Lower leg skin (tissue), 4 donors: ENCODE measurements at regions of chr6 and their contacts with region 1.

Region 1: DNA sequence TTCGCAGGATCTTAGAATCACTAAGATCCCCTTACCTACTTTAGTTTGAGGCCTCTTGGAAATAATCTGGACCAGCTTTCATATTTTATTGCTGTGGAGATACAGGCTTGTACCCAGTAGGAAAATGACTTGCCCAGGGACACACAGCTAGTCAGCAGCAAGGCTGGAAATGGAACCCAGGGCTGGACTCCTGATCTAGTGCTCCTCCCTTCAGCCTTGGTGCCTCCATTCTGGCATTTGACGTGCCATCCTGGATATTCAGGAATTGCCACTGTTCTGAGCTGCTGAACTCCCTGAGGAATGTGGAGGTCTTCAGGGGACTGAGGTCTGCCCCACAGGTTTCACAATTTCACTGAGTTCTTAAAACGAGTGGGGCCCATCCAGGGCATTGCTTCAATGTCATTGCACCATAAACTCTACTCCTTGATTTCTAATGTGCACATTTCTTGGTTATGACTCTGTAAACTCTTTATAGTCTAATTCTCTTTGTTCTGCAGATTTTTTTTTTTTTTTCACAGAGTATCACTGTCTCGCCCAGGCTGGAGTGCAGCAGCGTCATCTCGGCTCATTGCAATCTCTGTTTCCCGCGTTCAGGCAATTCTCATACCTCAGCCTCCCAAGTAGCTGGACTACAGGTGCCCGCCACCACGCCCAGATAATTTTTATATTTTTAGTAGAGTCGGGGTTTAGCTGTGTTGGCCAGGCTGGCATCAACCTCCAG is 26.7 kb upstream of the CDKN1A start:
- DNase-seq: no peak
- H3K4me3 ChIP-seq: no peak overlapping the region
- CTCF ChIP-seq: no peak
- POLR2A ChIP-seq: no peak

Region 2: DNA sequence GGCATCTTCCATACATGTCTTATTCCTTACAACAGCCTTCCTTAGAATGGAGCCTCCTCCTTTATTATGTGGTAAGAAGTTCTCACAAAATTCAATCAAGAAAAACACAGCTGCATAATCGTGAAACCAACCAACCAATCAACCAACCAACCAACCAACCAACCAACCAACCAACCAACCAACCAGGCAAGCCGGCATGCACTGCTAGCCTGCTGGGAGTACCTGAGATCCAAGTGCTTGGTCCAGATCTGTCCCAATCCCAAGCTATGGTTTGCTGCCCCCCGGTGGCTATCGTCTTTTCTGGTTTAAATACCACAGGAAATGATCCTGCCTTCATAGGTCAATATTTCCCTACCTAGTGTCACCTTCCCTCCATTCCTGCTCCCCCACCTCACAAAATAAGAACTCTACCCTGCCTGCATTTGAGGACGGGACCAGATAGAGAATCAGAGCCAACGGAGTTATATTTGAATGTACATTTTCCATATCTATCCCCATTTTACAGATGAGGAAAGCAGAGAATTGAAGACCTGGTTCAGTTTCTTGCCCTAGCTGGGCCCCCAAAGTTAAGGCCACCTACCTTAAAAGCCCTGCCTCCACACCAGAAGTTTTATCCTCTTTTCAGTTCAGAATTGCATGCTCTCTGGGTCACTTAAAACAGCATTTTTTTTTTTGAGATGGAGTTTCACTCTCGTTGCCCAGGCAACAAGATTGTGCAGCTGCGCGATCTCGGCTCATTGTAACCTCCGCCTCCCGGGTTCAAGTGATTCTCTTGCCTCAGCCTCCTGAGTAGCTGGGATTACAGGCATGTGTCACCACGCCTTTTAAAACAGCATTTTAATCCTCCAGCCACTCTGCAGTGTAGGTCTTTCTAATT is 72.9 kb after region 1 on chr6:
- intact Hi-C with region 1: loop called (anchors 2 kb)
- DNase-seq: peak in 1 of 2 donors; percentile 60
- H3K4me3 ChIP-seq: no peak overlapping the region
- CTCF ChIP-seq: no peak
- POLR2A ChIP-seq: no peak